ENCODE measurements at regions of chr4 and their contacts with region 1.

Region 1: DNA sequence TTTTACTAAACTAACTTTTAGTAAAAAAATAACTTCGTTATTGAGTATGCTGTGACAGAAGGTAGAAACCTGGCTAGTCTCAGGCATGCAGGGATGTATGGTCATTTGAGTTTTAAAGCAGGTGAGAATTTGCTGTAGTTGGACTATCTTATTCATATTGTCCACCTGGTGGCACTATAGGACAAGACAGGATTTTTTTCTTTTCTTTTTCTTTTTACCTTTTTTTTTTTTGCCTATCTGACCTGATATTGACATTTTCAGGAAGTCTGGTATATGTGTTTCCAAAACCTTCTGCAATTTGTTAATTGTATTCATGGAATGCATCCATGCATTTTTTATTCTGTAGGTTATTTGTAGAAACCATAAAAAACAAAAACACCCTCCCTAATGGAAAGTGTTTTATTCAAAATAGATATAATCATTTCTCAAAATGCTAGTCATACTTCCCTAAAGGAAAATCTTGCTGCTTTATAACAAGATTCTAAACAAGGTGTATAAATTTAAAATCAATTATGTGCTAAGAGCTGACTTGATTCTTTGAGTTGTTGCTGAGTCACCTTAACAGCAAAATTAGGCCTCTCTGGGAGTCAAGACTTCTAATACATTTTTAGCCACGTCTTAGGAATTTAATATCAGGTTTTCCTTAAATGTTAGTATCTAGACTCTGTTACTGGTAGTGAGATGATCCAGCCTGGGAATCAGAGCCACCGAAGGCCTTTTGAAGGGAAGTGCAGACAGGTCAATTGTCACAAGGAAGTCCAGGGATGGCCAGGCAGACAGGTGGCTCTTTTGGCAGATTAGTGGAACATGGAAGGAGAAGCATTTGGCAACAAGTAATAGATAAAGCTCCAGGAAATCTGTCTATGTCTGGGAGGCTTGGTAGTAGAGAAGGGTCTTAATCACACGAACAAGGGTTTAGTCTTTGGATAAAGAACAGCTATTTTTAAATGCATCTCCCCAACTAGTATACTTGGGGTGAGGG is 201.3 kb upstream of the GNPDA2 start:
- DNase-seq: no peak
- ATAC-seq: no peak
- H3K4me3 ChIP-seq: no peak overlapping the region
- H3K27ac ChIP-seq: no peak overlapping the region
- H3K4me1 ChIP-seq: no peaks in the 10 kb centered on the region
- H3K27me3 ChIP-seq: no peaks in the 10 kb centered on the region
- CTCF ChIP-seq: peak; percentile 61; the same call in 1 of the 2 replicates

Region 2: DNA sequence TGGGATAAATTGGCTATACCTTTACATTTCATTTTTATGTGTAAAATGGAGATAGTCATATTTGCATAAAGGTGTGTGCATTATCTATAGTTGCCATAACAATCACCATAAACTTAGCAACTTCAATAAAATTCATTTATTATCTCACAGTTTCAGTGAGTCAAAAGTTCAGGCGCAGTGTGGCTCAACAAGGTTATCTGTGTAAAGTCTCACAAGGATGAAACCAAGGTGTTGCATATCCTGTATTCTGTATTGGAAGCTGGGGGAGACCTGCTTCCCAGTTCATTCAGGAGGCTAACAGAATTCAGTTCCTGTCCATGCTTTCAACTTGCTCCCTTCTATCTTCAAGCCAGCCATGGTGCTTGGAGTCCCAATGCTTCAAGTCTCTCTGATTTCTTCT is 648.6 kb before region 1 on chr4:
- CTCF ChIA-PET with region 1: no interaction called
- POLR2A ChIA-PET with region 1: no interaction called
- in situ Hi-C with region 1: no loop called
- intact Hi-C with region 1: no loop called
- DNase-seq: no peak
- ATAC-seq: no peak
- H3K4me3 ChIP-seq: no peak overlapping the region
- H3K27ac ChIP-seq: no peak overlapping the region
- H3K4me1 ChIP-seq: no peaks in the 10 kb centered on the region
- H3K27me3 ChIP-seq: no peaks in the 10 kb centered on the region
- CTCF ChIP-seq: no peak

Region 3: GRCh38 chr4:45172636-45173035 is 244.9 kb after region 1 on chr4:
- CTCF ChIA-PET with region 1: no interaction called
- POLR2A ChIA-PET with region 1: no interaction called
- in situ Hi-C with region 1: no loop called
- intact Hi-C with region 1: no loop called
- DNase-seq: no peak
- ATAC-seq: no peak
- H3K4me3 ChIP-seq: no peak overlapping the region
- H3K27ac ChIP-seq: no peak overlapping the region
- H3K4me1 ChIP-seq: no peaks in the 10 kb centered on the region
- H3K27me3 ChIP-seq: no peaks in the 10 kb centered on the region
- CTCF ChIP-seq: no peak

Region 4: GRCh38 chr4:45442466-45442865 is 514.8 kb after region 1 on chr4:
- CTCF ChIA-PET with region 1: no interaction called
- POLR2A ChIA-PET with region 1: no interaction called
- in situ Hi-C with region 1: no loop called
- intact Hi-C with region 1: loop called (anchors 1 kb)
- DNase-seq: no peak
- ATAC-seq: no peak
- H3K4me3 ChIP-seq: no peak overlapping the region
- H3K27ac ChIP-seq: no peak overlapping the region
- H3K4me1 ChIP-seq: no peaks in the 10 kb centered on the region
- H3K27me3 ChIP-seq: no peaks in the 10 kb centered on the region
- CTCF ChIP-seq: no peak; the same call in 1 of the 2 replicates

Measured in Panc1 (cell line).